Esophagus squamous epithelium (tissue), 5 donors: ENCODE measurements at regions of chr11 and their contacts with region 1.

Region 1: GRCh38 chr11:123407130-123407995 is 22.7 kb upstream of the GRAMD1B start:
- DNase-seq: no peak
- H3K4me3 ChIP-seq: peak overlapping the region in 1 of 4 donors; percentile 19
- H3K27ac ChIP-seq: no peak overlapping the region
- H3K4me1 ChIP-seq: peaks cover 0 to 10% (median 0%) of the 10 kb centered on the region in 3 donors
- H3K27me3 ChIP-seq: peaks cover 0 to 43% (median 0%) of the 10 kb centered on the region in 4 donors
- CTCF ChIP-seq: peak; percentile 19 to 78 (median 64)
- POLR2A ChIP-seq: no peak

Region 2: GRCh38 chr11:123301696-123302400 is 105.5 kb before region 1 on chr11:
- intact Hi-C with region 1: loop called (anchors 10 kb)
- DNase-seq: no peak
- H3K4me3 ChIP-seq: peak overlapping the region; percentile 8 to 72 (median 36)
- H3K27ac ChIP-seq: no peak overlapping the region
- H3K4me1 ChIP-seq: peaks cover 0 to 20% (median 6%) of the 10 kb centered on the region in 3 donors
- H3K27me3 ChIP-seq: peaks cover 0 to 69% (median 0%) of the 10 kb centered on the region in 4 donors
- CTCF ChIP-seq: peak; percentile 56 to 89 (median 85)
- POLR2A ChIP-seq: no peak

Region 3: DNA sequence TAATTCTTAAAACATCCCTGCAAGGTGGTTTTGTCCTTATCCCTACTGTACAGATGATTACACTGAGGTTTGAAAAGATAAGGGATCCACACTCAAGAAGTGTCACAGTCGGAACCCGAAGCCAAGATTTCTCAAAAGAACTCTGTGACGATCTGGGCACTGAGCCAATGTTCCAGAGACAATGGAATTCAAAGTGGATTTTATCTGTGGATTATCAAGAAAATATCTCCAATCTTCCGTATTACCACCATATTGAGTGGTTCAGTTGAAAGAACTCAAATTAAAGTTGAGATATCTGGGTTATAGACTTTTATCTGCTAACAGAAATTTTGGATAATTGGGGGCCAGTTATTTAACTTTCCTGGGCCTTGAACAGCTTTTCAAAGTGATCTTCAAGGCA is 77.3 kb before region 1 on chr11:
- intact Hi-C with region 1: no loop called
- DNase-seq: no peak
- H3K4me3 ChIP-seq: no peak overlapping the region
- H3K27ac ChIP-seq: no peak overlapping the region
- H3K4me1 ChIP-seq: peaks cover 0 to under 1% (median 0%) of the 10 kb centered on the region in 3 donors
- H3K27me3 ChIP-seq: peaks cover 0 to 15% (median 0%) of the 10 kb centered on the region in 4 donors
- CTCF ChIP-seq: no peak
- POLR2A ChIP-seq: no peak

Region 4: GRCh38 chr11:123478352-123478987 is 71.1 kb after region 1 on chr11:
- intact Hi-C with region 1: loop called (anchors 5 kb)
- DNase-seq: no peak
- H3K4me3 ChIP-seq: peak overlapping the region in 1 of 4 donors; percentile 11
- H3K27ac ChIP-seq: no peak overlapping the region
- H3K4me1 ChIP-seq: peaks cover 0 to 20% (median 13%) of the 10 kb centered on the region in 3 donors
- H3K27me3 ChIP-seq: peaks cover 0 to 2% (median 0%) of the 10 kb centered on the region in 4 donors
- CTCF ChIP-seq: peak in 5 of 6 experiments; percentile 63 to 77 (median 73)
- POLR2A ChIP-seq: no peak